ENCODE measurements at regions of chr6 and their contacts with region 1.

Region 1: DNA sequence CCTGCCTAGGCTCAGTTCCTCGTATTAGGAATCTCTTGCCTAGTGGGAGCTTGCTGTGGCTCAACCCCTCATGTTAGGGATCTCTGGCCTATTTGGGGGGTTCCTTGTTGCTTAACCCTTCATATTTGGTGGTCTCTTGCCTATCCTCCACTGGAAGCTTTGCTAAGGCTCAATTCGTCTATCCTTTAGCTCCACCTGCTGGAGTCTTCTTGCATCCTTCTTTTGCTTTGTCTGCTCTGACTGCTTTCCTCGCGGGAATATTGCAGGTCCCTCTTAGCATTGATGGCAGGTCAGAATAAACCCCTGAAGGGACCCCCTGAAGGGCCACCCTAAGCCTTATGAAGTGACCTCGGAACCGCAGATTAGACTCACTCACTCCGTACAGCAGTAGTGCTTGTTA is 203.0 kb upstream of the TBX18 start:
- DNase-seq: peak in 4 of 7 donors; percentile 17 to 31 (median 23)
- H3K4me3 ChIP-seq: no peak overlapping the region
- H3K27ac ChIP-seq: no peak overlapping the region
- H3K4me1 ChIP-seq: no peaks in the 10 kb centered on the region
- H3K27me3 ChIP-seq: no peaks in the 10 kb centered on the region
- CTCF ChIP-seq: peak; percentile 23 to 52 (median 52)
- POLR2A ChIP-seq: no peak

Region 2: GRCh38 chr6:84428300-84428907 is 539.0 kb before region 1 on chr6:
- intact Hi-C with region 1: loop called in 1 of 2 experiments (anchors 10 kb)
- DNase-seq: peak; percentile 17 to 51 (median 24)
- H3K4me3 ChIP-seq: no peak overlapping the region
- H3K27ac ChIP-seq: no peak overlapping the region
- H3K4me1 ChIP-seq: no peaks in the 10 kb centered on the region
- H3K27me3 ChIP-seq: peaks cover 7% of the 10 kb centered on the region
- CTCF ChIP-seq: peak; percentile 21 to 53 (median 44)
- POLR2A ChIP-seq: no peak

Region 3: GRCh38 chr6:84791233-84791632 is 176.2 kb before region 1 on chr6:
- intact Hi-C with region 1: no loop called
- DNase-seq: no peak
- H3K4me3 ChIP-seq: no peak overlapping the region
- H3K27ac ChIP-seq: no peak overlapping the region
- H3K4me1 ChIP-seq: no peaks in the 10 kb centered on the region
- H3K27me3 ChIP-seq: no peaks in the 10 kb centered on the region
- CTCF ChIP-seq: no peak
- POLR2A ChIP-seq: no peak

Measured in adrenal gland (tissue), 19 donors.